ENCODE measurements at regions of chr10 and their contacts with region 1.

Region 1: GRCh38 chr10:72069751-72070526 is 18.4 kb downstream of the SPOCK2 start:
- DNase-seq: no peak

Region 2: DNA sequence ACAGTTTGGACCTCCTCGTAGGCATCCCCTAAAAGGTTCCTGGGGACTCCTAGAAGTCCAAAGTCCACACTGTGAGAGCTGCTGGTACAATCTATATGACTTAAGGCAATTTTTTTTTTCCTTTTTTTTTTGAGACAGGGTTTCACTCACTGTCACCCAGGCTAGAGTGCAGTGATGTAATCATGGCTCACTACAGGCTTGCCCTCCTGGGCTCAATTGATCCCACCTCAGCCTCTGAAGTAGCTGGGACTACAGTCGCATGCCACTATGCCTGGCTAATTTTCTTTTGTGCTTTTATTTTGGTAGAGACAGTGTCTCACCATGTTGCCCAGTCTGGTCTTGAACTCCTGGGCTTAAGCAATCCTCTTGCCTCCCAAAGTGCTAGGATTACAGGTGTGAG is 23.0 kb after region 1 on chr10:
- intact Hi-C with region 1: loop called (anchors 1 kb)
- DNase-seq: no peak

Region 3: DNA sequence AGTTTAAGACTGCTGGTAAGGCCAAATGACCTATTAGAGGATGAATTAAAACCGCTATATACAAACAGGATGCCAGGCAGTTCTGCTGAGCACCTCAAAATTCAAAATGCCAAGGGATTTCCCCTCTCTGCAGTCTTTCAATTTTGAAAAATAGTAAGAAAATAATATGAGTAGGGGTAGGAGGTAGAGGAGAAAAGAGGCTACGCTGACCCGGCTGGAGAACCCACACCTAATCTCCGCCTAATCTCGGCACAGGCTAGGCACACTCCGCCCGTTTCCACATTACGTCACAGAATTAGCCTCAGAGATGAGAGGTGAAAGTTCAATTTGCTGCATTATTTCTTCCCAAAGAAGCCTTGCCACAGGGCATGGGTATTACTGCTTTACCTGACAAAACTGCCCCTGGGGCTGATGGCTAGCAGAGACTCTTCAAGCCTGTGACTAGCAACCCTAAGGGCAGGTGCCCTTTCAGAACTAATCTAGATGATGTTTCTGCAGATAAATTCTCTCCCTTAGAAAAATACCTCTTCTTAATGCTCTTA is 39.8 kb after region 1 on chr10:
- intact Hi-C with region 1: loop called (anchors 5 kb)
- DNase-seq: no peak